ENCODE measurements at regions of chr15 and their contacts with region 1.

Region 1: GRCh38 chr15:43440721-43441281 is 52.2 kb downstream of the TP53BP1 start:
- DNase-seq: peak; percentile 99
- ATAC-seq: peak; percentile 96
- H3K4me3 ChIP-seq: no peak overlapping the region
- H3K27ac ChIP-seq: peak overlapping the region; percentile 83; the same call in 1 of the 2 replicates
- H3K4me1 ChIP-seq: peaks cover 4% of the 10 kb centered on the region
- H3K27me3 ChIP-seq: no peaks in the 10 kb centered on the region
- CTCF ChIP-seq: peak; percentile 84
- POLR2A ChIP-seq: no peak; the same call in 1 of the 2 replicates
- RAD21 ChIP-seq: peak; percentile 89

Region 2: GRCh38 chr15:43510200-43511011 is 69.6 kb after region 1 on chr15:
- CTCF ChIA-PET with region 1: interaction called, 10 read pairs
- POLR2A ChIA-PET with region 1: no interaction called
- dilution Hi-C with region 1: no loop called
- in situ Hi-C with region 1: no loop called
- intact Hi-C with region 1: loop called (anchors 2 kb)
- DNase-seq: peak; percentile 98
- ATAC-seq: peak; percentile 96
- H3K4me3 ChIP-seq: peak overlapping the region; percentile 54
- H3K27ac ChIP-seq: peak overlapping the region; percentile 78
- H3K4me1 ChIP-seq: peaks cover 16% of the 10 kb centered on the region
- H3K27me3 ChIP-seq: no peaks in the 10 kb centered on the region
- CTCF ChIP-seq: peak; percentile 41
- POLR2A ChIP-seq: peak; percentile 35; the same call in 1 of the 2 replicates
- RAD21 ChIP-seq: no peak

Region 3: GRCh38 chr15:43517354-43518196 is 76.8 kb after region 1 on chr15 and contains the start of gene MAP1A:
- CTCF ChIA-PET with region 1: interaction called, 10 read pairs
- POLR2A ChIA-PET with region 1: no interaction called
- dilution Hi-C with region 1: no loop called
- in situ Hi-C with region 1: no loop called
- intact Hi-C with region 1: loop called (anchors 1 kb)
- DNase-seq: peak; percentile 71
- ATAC-seq: peak; percentile 72
- H3K4me3 ChIP-seq: peak within 1 kb of the TSS; percentile 79
- H3K27ac ChIP-seq: peak within 1 kb of the TSS; percentile 81
- H3K4me1 ChIP-seq: peaks cover 20% of the 10 kb centered on the region
- H3K27me3 ChIP-seq: no peaks in the 10 kb centered on the region
- CTCF ChIP-seq: no peak
- POLR2A ChIP-seq: 0 out of 2 replicates have a peak, but pooled peaks have one; percentile 19
- RAD21 ChIP-seq: no peak
- total RNA-seq, gene MAP1A: 47.2 and 48.2 TPM in 2 replicates

Region 4: DNA sequence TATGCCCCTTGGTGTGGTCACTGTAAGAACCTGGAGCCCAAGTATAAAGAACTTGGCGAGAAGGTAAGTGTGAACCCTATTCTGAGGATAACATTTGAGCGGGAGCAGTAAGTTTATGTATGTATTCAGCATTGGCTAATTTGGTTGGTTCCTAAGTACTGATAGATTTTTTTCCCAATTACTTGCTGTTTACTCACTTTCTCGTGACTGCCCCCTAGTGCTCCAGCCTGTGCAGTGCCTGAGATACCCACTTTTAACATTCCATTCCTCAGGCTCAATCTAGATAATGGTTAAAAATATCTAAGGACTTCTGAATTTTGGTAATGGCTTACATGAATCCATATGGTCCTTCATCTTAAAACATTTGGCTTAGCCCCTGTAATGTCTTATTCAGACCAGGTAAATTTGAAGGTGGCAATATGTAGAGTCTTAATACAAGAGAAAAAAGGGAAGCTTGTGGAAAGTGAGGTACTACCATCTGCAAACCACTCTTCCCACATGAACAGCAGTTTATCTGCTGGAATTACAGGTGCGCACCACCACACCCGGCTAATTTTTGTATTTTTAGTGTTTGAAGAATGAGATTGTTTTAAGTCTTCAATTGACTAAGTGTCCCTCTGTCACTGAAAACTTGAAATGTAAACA is 328.9 kb after region 1 on chr15:
- CTCF ChIA-PET with region 1: no interaction called
- POLR2A ChIA-PET with region 1: no interaction called
- dilution Hi-C with region 1: no loop called
- in situ Hi-C with region 1: no loop called
- intact Hi-C with region 1: loop called (anchors 10 kb)
- DNase-seq: peak; percentile 64
- ATAC-seq: peak; percentile 94
- H3K4me3 ChIP-seq: no peak overlapping the region
- H3K27ac ChIP-seq: no peak overlapping the region
- H3K4me1 ChIP-seq: no peaks in the 10 kb centered on the region
- H3K27me3 ChIP-seq: no peaks in the 10 kb centered on the region
- CTCF ChIP-seq: peak; percentile 81
- POLR2A ChIP-seq: no peak
- RAD21 ChIP-seq: peak; percentile 52